ENCODE measurements at regions of chr1 and their contacts with region 1.

Region 1: DNA sequence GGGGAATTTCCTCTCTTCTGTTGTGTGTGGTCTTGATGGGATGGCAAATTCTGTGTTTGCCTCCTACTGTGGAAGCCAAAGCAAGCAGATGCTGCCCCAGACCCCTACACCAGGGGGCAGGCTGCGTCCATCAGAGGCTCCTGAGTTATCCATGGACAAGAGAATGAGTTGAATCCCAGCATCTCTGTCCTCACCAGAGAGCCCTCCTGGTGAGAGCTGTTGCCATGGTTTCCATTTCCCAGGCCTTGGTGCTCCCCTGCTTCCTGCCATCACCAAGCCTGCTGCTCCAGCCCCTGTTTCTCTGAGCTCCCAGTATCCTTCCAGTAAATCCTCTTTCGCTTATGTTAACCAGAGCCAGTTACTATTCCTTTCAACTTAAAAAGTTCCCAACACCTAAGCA is 20.4 kb upstream of the GNG12 start:
- DNase-seq: peak; percentile 48 to 67 (median 55)
- ATAC-seq: peak; percentile 62
- H3K4me3 ChIP-seq: no peak overlapping the region
- H3K27ac ChIP-seq: no peak overlapping the region
- H3K4me1 ChIP-seq: peaks cover 6% of the 10 kb centered on the region
- H3K27me3 ChIP-seq: no peaks in the 10 kb centered on the region
- CTCF ChIP-seq: peak; percentile 18 to 69 (median 55)
- POLR2A ChIP-seq: no peak

Region 2: DNA sequence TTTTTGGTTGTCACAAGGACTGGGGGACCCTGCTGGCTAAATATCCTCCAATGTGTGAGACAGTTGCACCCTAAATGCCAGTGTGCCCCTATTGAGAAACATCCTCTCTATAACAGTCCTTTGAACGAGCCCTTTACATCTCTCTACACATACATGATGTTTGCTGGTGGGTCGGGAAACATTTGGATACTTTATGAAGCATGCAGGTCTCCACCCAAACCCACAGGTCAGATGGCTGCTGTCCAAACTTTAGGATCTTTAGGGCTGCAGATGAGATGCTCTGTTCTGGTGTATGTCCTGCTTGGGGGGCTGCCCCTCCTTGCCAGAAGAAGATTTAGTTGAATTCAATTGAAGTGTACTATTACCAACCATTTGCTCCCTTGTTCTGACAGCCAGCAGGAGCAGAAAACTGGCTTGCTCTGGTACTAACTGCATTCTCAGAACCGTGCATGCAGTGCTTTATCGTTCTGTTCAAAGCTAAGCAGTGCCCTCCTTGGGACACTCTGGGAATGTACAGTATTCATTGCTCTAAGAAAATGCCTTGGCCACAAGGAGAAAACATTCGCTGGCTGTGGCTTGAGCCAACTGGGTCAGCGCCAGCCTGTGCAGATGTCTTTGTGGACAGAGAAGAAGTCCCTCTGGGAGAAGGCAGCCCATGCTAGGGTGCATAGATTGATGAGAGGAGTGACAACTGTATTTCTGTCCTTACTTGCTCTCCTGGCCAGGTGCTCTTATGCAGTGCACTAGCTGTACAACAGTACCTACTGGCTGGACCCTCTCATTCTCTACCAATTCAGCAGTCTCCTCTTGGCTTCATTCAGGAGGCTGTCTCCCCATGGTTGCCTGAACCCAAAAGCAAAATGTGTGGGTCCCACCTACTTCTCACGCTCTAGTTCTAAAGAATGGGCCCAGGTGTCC is 258.1 kb after region 1 on chr1:
- intact Hi-C with region 1: loop called (anchors 5 kb)
- DNase-seq: peak; percentile 55 to 78 (median 69)
- ATAC-seq: peak; percentile 75
- H3K4me3 ChIP-seq: no peak overlapping the region
- H3K27ac ChIP-seq: no peak overlapping the region
- H3K4me1 ChIP-seq: peaks cover 2% of the 10 kb centered on the region
- H3K27me3 ChIP-seq: no peaks in the 10 kb centered on the region
- CTCF ChIP-seq: peak in 6 of 7 experiments; percentile 17 to 75 (median 60)
- POLR2A ChIP-seq: no peak

Measured in body of pancreas (tissue), 4 donors.